ENCODE measurements at regions of chr2 and their contacts with region 1.

Region 1: GRCh38 chr2:85826990-85827878 is 61.6 kb downstream of the ST3GAL5 start:
- DNase-seq: peak; percentile 82
- H3K4me3 ChIP-seq: no peak overlapping the region
- H3K27ac ChIP-seq: no peak overlapping the region
- H3K4me1 ChIP-seq: no peaks in the 10 kb centered on the region
- H3K27me3 ChIP-seq: no peaks in the 10 kb centered on the region
- CTCF ChIP-seq: peak; percentile 78 to 88 (median 82)
- POLR2A ChIP-seq: no peak

Region 2: GRCh38 chr2:86079981-86080911 is 253.0 kb after region 1 on chr2:
- intact Hi-C with region 1: loop called (anchors 5 kb)
- DNase-seq: peak; percentile 90
- H3K4me3 ChIP-seq: no peak overlapping the region
- H3K27ac ChIP-seq: no peak overlapping the region
- H3K4me1 ChIP-seq: no peaks in the 10 kb centered on the region
- H3K27me3 ChIP-seq: no peaks in the 10 kb centered on the region
- CTCF ChIP-seq: peak; percentile 73 to 80 (median 75)
- POLR2A ChIP-seq: no peak

Region 3: DNA sequence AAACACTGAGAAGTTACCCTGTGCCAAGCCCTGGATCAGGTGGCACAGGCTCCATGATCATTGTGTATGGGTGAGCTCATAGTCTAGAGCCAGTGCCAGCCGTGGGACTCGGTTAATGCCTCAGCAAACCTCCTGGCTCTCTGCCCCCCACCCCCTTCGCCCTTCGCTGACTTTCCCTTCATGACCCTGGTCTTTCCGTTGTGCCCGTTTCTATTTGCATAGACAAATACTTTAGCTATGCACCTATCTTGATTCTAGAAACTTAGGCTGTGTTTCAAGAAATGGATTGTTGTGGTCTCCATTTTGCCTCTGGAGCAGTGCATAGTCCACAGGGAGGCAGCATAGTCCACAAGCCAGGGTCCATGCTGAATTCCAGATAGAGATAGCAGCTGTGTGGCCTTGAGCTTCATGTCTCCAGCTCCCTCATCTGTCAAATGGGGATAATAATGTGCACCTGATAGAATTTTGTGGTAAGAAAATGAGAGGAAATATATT is 569.1 kb after region 1 on chr2:
- intact Hi-C with region 1: no loop called
- DNase-seq: peak; percentile 60
- H3K4me3 ChIP-seq: no peak overlapping the region
- H3K27ac ChIP-seq: no peak overlapping the region
- H3K4me1 ChIP-seq: peaks cover 15% of the 10 kb centered on the region
- H3K27me3 ChIP-seq: no peaks in the 10 kb centered on the region
- CTCF ChIP-seq: peak in 1 of 3 experiments; percentile 33
- POLR2A ChIP-seq: no peak

Measured in testis (tissue), 5 donors.